ENCODE measurements at regions of chr7 and their contacts with region 1.

Region 1: DNA sequence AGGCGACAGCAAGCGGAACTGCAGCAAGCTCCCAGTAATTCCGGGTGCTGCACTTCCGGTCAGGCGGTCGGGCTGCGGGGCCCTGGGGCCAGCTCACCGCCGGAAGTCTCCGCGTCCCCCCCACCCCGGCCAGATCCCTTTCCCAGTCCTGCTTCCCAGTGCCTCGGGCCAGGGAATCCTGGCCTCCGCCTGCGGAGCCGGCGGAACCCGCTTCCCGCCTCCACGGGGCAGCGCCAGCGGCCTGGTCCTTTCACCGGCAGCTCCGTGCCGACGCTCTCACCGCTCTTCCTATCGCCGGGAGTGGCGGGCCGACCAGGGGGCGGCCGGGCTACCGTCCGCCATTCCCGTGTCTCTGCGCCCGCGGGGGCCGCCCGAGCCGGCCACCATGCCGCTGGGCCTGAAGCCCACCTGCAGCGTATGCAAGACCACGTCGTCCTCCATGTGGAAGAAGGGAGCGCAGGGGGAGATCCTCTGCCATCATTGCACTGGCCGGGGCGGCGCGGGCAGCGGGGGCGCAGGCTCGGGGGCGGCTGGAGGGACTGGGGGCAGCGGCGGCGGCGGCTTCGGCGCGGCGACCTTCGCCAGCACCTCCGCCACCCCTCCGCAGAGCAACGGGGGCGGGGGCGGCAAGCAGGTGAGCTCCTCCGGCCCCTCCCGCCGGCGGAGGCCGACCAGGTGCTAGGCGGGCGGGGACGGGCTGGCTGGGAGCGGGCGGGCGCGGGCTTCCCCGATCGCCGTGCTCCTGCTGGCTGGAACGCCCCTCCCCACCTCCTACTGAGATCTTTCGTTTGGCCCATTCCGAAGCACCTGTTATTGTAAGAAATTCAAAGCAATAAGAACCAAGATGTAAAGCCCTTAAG is at the start of gene GATAD1:
- DNase-seq: peak; percentile 55 to 91 (median 79)
- ATAC-seq: peak; percentile 78
- H3K4me3 ChIP-seq: peak within 1 kb of the TSS; percentile 73 to 79
- H3K4me3 Mint-ChIP-seq: peak within 1 kb of the TSS; percentile 91
- H3K27ac ChIP-seq: peak within 1 kb of the TSS; percentile 92 to 97
- H3K27ac Mint-ChIP-seq: peak within 1 kb of the TSS; percentile 99
- H3K4me1 ChIP-seq: peaks cover 17% of the 10 kb centered on the region
- H3K4me1 Mint-ChIP-seq: peaks cover 16% of the 10 kb centered on the region
- H3K27me3 ChIP-seq: no peaks in the 10 kb centered on the region
- H3K27me3 Mint-ChIP-seq: no peaks in the 10 kb centered on the region
- CTCF ChIP-seq: peak; percentile 90
- total RNA-seq, gene GATAD1: 10.3 to 10.5 TPM

Region 2: DNA sequence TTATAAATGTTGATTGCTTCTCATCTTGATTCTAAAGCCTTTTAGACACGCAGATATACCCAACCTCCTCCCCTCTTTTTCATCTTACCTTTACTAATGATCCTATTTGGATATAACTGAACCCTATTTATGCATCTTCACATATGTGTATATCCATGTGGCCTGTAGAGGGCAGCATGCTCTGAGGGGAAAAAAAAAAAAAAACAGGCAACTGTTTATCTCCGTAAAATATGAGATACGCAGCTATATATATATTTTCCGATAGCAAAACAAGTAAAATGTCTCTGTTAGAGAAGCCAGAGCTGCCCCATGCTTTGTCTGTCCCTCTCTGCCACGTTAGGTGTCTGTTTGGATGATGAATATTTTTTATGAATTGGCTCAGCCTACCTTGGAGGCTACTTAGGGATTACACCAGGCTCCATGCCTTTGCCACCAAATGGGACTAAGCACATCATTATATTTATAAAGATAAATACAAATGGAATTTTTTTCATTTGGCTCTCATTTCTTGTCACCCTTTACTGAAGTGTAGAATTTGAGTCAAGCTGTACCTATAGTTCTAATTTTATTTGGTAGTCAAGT is 1358.1 kb before region 1 on chr7:
- CTCF ChIA-PET with region 1: no interaction called
- POLR2A ChIA-PET with region 1: no interaction called
- intact Hi-C with region 1: loop called in 1 of 2 experiments (anchors 10 kb)
- DNase-seq: peak in 2 of 9 experiments; percentile 22 to 49
- ATAC-seq: no peak
- H3K4me3 ChIP-seq: no peak overlapping the region
- H3K4me3 Mint-ChIP-seq: no peak overlapping the region
- H3K27ac ChIP-seq: no peak overlapping the region
- H3K27ac Mint-ChIP-seq: no peak overlapping the region
- H3K4me1 ChIP-seq: peaks cover 18% of the 10 kb centered on the region
- H3K4me1 Mint-ChIP-seq: peaks cover 17% of the 10 kb centered on the region
- H3K27me3 ChIP-seq: no peaks in the 10 kb centered on the region
- H3K27me3 Mint-ChIP-seq: no peaks in the 10 kb centered on the region
- CTCF ChIP-seq: peak; percentile 70

Region 3: GRCh38 chr7:91880413-91881241 is 566.9 kb before region 1 on chr7 and contains the start of gene MTERF1:
- CTCF ChIA-PET with region 1: interaction called, 4 read pairs
- POLR2A ChIA-PET with region 1: interaction called, 5 read pairs
- intact Hi-C with region 1: loop called (anchors 1 to 2 kb)
- DNase-seq: peak; percentile 82 to 96 (median 95)
- ATAC-seq: peak; percentile 96
- H3K4me3 ChIP-seq: peak within 1 kb of the TSS; percentile 78 to 90
- H3K4me3 Mint-ChIP-seq: peak within 1 kb of the TSS; percentile 94
- H3K27ac ChIP-seq: peak within 1 kb of the TSS; percentile 63 to 77
- H3K27ac Mint-ChIP-seq: peak within 1 kb of the TSS; percentile 97
- H3K4me1 ChIP-seq: peaks cover 21% of the 10 kb centered on the region
- H3K4me1 Mint-ChIP-seq: peaks cover 40% of the 10 kb centered on the region
- H3K27me3 ChIP-seq: no peaks in the 10 kb centered on the region
- H3K27me3 Mint-ChIP-seq: no peaks in the 10 kb centered on the region
- CTCF ChIP-seq: peak; percentile 97
- total RNA-seq, gene MTERF1: 12.3 to 12.5 TPM

Region 4: GRCh38 chr7:92134271-92135051 is 313.1 kb before region 1 on chr7 and contains the start of gene CYP51A1:
- CTCF ChIA-PET with region 1: interaction called, 3 read pairs
- POLR2A ChIA-PET with region 1: interaction called, 15 read pairs
- intact Hi-C with region 1: loop called (anchors 1 to 5 kb)
- DNase-seq: peak; percentile 87 to 97 (median 94)
- ATAC-seq: peak; percentile 86
- H3K4me3 ChIP-seq: peak within 1 kb of the TSS; percentile 72 to 94
- H3K4me3 Mint-ChIP-seq: peak within 1 kb of the TSS; percentile 100
- H3K27ac ChIP-seq: peak within 1 kb of the TSS; percentile 88 to 93
- H3K27ac Mint-ChIP-seq: peak within 1 kb of the TSS; percentile 100
- H3K4me1 ChIP-seq: peaks cover 11% of the 10 kb centered on the region
- H3K4me1 Mint-ChIP-seq: peaks cover 32% of the 10 kb centered on the region
- H3K27me3 ChIP-seq: no peaks in the 10 kb centered on the region
- H3K27me3 Mint-ChIP-seq: no peaks in the 10 kb centered on the region
- CTCF ChIP-seq: no peak
- total RNA-seq, gene CYP51A1: 44.3 to 44.4 TPM

Region 5: DNA sequence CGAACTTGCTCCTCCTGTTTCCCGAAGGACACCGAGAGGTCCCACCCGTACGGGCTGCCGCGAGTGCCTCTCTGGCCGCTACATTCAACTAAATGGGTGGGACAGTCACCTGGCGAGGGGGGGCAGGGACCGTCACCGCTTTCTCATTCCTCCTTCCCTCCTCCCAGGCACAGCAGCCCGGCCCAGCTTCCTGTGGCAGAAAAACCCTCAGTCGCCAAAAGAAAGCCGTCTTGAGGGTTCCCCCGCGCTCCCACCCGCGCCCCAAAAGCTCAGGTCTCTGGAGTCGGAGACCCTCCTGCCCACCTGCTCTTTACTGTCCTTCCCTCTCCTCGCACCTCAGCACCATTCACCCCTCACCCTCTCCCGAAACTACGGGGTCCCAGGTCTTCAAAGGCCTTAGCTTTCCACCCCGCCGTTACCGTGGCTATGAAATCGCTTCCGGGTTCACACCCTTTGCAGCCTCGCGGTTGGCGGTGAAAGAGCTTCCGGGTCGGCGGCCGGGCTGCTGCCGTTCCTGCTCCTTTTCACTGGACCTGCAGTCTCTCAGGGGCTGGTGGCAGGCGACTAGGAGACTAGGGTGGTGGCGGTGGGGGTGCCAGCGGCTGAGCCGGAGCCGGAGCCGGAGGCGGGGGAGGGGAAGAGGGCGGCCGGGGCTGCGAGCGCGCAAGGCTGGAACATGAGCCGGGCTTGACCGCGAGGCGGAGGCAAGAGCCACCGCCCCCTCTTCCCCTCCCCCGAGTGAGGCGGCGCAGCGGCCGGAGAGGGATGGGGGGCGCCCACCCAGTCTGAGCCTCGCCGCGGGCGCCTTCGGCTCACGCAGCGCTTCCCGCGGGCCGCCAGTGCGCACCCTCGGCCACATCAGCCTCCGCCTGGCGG is 201.8 kb before region 1 on chr7 and contains the starts of genes ANKIB1 and KRIT1:
- CTCF ChIA-PET with region 1: no interaction called
- POLR2A ChIA-PET with region 1: interaction called, 17 read pairs
- intact Hi-C with region 1: loop called (anchors 1 to 2 kb)
- DNase-seq: peak; percentile 65 to 93 (median 88)
- ATAC-seq: peak; percentile 74
- H3K4me3 ChIP-seq: peak within 1 kb of the TSS; percentile 86 to 90
- H3K4me3 Mint-ChIP-seq: peak within 1 kb of the TSS; percentile 98
- H3K27ac ChIP-seq: peak within 1 kb of the TSS; percentile 93 to 98
- H3K27ac Mint-ChIP-seq: peak within 1 kb of the TSS; percentile 99
- H3K4me1 ChIP-seq: peaks cover 29% of the 10 kb centered on the region
- H3K4me1 Mint-ChIP-seq: peaks cover 52% of the 10 kb centered on the region
- H3K27me3 ChIP-seq: no peaks in the 10 kb centered on the region
- H3K27me3 Mint-ChIP-seq: no peaks in the 10 kb centered on the region
- CTCF ChIP-seq: no peak
- total RNA-seq, gene ANKIB1: 51.1 to 59.6 TPM
- total RNA-seq, gene KRIT1: 25.0 to 27.0 TPM

Region 6: GRCh38 chr7:92461027-92462003 is 13.7 kb after region 1 on chr7:
- CTCF ChIA-PET with region 1: interaction called, 30 read pairs
- POLR2A ChIA-PET with region 1: interaction called, 3 read pairs
- intact Hi-C with region 1: no loop called
- DNase-seq: peak in 4 of 9 experiments; percentile 14 to 54 (median 30)
- ATAC-seq: peak; percentile 51
- H3K4me3 ChIP-seq: no peak overlapping the region
- H3K4me3 Mint-ChIP-seq: no peak overlapping the region
- H3K27ac ChIP-seq: no peak overlapping the region
- H3K27ac Mint-ChIP-seq: no peak overlapping the region
- H3K4me1 ChIP-seq: no peaks in the 10 kb centered on the region
- H3K4me1 Mint-ChIP-seq: no peaks in the 10 kb centered on the region
- H3K27me3 ChIP-seq: no peaks in the 10 kb centered on the region
- H3K27me3 Mint-ChIP-seq: no peaks in the 10 kb centered on the region
- CTCF ChIP-seq: peak; percentile 87

Region 7: GRCh38 chr7:92590711-92591310 is 143.2 kb after region 1 on chr7:
- CTCF ChIA-PET with region 1: interaction called, 4 read pairs
- POLR2A ChIA-PET with region 1: no interaction called
- intact Hi-C with region 1: loop called (anchors 5 kb)
- DNase-seq: peak in 1 of 9 experiments; percentile 11
- ATAC-seq: no peak
- H3K4me3 ChIP-seq: peak overlapping the region; percentile 71 to 74
- H3K4me3 Mint-ChIP-seq: peak overlapping the region; percentile 96
- H3K27ac ChIP-seq: no peak overlapping the region
- H3K27ac Mint-ChIP-seq: no peak overlapping the region
- H3K4me1 ChIP-seq: peaks cover 32% of the 10 kb centered on the region
- H3K4me1 Mint-ChIP-seq: peaks cover 46% of the 10 kb centered on the region
- H3K27me3 ChIP-seq: no peaks in the 10 kb centered on the region
- H3K27me3 Mint-ChIP-seq: no peaks in the 10 kb centered on the region
- CTCF ChIP-seq: no peak